Kidney (tissue), 22 donors: ENCODE measurements at regions of chr17 and their contacts with region 1.

Region 1: DNA sequence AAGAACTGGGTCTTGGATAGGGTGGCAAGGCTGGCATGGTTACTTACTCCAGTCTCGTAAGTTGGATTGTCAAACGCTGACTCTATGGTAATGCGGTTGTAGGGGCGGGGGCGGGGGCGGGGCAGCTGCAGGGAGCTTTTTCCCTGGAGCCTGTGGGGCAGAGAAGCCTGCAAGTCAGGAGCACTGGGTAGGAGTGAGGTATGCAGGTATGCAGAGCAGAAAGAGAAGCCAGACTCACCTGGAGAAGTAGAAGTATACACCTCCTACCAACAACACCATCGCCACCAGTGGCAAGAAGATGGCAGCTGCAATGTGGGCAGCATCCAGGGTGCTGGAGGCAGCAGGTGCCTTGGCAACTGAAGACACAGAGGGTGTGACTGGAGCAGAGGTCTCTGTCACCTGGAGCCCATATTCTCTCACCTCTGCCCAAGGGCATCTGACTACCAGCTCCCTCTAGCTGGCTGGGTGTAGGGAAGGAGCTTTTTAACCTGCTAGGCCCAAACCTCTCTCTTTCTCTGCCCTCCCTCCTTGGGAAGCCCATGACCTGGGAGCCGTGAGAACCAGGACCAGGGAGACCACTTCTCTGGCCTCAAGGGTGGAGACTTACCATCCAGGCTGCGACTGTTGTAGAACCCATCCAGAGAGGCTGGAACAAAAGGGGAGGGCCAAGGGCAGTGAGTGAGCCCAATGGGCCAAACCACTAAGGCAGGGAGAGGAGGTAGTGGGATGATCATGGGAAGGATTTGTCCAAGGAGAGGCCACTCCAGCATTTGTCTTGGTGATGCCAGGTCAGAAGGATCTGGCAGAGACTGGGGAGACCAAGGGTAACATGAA is 5.0 kb upstream of the PHF12 start:
- DNase-seq: no peak
- H3K4me3 ChIP-seq: no peak overlapping the region
- H3K27ac ChIP-seq: no peak overlapping the region
- H3K4me1 ChIP-seq: peaks cover 0 to 8% (median 8%) of the 10 kb centered on the region in 3 donors
- H3K27me3 ChIP-seq: no peaks in the 10 kb centered on the region
- CTCF ChIP-seq: no peak

Region 2: GRCh38 chr17:29116804-29117772 is 160.8 kb after region 1 on chr17:
- intact Hi-C with region 1: loop called (anchors 5 kb)
- DNase-seq: peak in 4 of 5 donors; percentile 62 to 81 (median 74)
- H3K4me3 ChIP-seq: no peak overlapping the region
- H3K27ac ChIP-seq: no peak overlapping the region
- H3K4me1 ChIP-seq: peaks cover 0 to 5% (median 4%) of the 10 kb centered on the region in 3 donors
- H3K27me3 ChIP-seq: no peaks in the 10 kb centered on the region
- CTCF ChIP-seq: peak; percentile 93